Right cardiac atrium (tissue), 5 donors: ENCODE measurements at regions of chr10 and their contacts with region 1.

Region 1: GRCh38 chr10:21265621-21266020 is 259.9 kb downstream of the SKIDA1 start:
- DNase-seq: no peak
- ATAC-seq: no peak
- H3K4me3 ChIP-seq: no peak overlapping the region
- H3K27ac ChIP-seq: no peak overlapping the region
- H3K4me1 ChIP-seq: no peaks in the 10 kb centered on the region
- H3K27me3 ChIP-seq: no peaks in the 10 kb centered on the region

Region 2: GRCh38 chr10:21078410-21079329 is 187.0 kb before region 1 on chr10:
- intact Hi-C with region 1: loop called (anchors 2 to 10 kb)
- DNase-seq: peak; percentile 64 to 76 (median 69)
- ATAC-seq: peak; percentile 79 to 90
- H3K4me3 ChIP-seq: no peak overlapping the region
- H3K27ac ChIP-seq: no peak overlapping the region
- H3K4me1 ChIP-seq: no peaks in the 10 kb centered on the region
- H3K27me3 ChIP-seq: no peaks in the 10 kb centered on the region

Region 3: DNA sequence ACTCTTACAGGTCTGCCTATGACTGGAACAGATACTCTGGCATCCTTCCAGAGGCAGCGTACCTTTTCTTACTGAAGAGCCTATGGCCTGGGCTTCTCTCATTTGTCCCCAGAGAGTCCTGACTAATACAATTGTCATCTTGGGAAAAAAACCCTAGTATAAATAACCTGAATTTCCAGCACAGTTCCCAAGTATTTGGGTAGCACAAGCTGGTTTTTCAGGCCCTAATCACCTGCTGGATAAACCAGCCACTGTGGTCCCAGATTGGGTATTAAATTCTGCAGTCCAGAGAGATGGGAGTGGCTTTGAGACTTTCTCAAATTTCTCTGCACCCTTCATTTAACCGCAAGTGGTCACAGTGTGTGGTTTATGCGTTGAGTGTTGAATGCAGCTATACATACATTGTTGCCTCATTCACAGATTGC is 181.7 kb before region 1 on chr10:
- intact Hi-C with region 1: loop called (anchors 2 to 10 kb)
- DNase-seq: no peak
- ATAC-seq: no peak
- H3K4me3 ChIP-seq: no peak overlapping the region
- H3K27ac ChIP-seq: no peak overlapping the region
- H3K4me1 ChIP-seq: no peaks in the 10 kb centered on the region
- H3K27me3 ChIP-seq: no peaks in the 10 kb centered on the region

Region 4: GRCh38 chr10:21315645-21316281 is 50.1 kb after region 1 on chr10:
- intact Hi-C with region 1: no loop called
- DNase-seq: peak; percentile 82 to 90 (median 87)
- ATAC-seq: peak; percentile 95 to 97
- H3K4me3 ChIP-seq: no peak overlapping the region
- H3K27ac ChIP-seq: peak overlapping the region; percentile 55
- H3K4me1 ChIP-seq: peaks cover 20% of the 10 kb centered on the region
- H3K27me3 ChIP-seq: no peaks in the 10 kb centered on the region